H1 (cell line): ENCODE measurements at regions of chr3 and their contacts with region 1.

Region 1: GRCh38 chr3:43690400-43691119 is at the start of gene ABHD5:
- DNase-seq: peak; percentile 89 to 94
- H3K4me3 ChIP-seq: peak within 1 kb of the TSS; percentile 51 to 87 (median 69)
- H3K27ac ChIP-seq: peak within 1 kb of the TSS; percentile 64
- H3K4me1 ChIP-seq: peaks cover 0 to 15% (median 4%) of the 10 kb centered on the region in 4 experiments; a peak in 5 of 7 replicates
- H3K27me3 ChIP-seq: no peaks in the 10 kb centered on the region
- CTCF ChIP-seq: peak in 2 of 3 experiments; percentile 19 to 20; a peak in 2 of 4 replicates
- EP300 ChIP-seq: no peak
- POLR2A ChIP-seq: peak; percentile 98 to 99
- RAD21 ChIP-seq: peak; percentile 19; a peak in 1 of 4 replicates
- total RNA-seq, gene ABHD5: 16.4 and 17.9 TPM in 2 replicates

Region 2: GRCh38 chr3:43621656-43622432 is 68.7 kb before region 1 on chr3 and contains the start of gene ANO10:
- CTCF ChIA-PET with region 1: no interaction called
- POLR2A ChIA-PET with region 1: interaction called, 10 read pairs
- DNase-seq: peak; percentile 98
- H3K4me3 ChIP-seq: peak within 1 kb of the TSS; percentile 66 to 97 (median 83)
- H3K27ac ChIP-seq: peak within 1 kb of the TSS; percentile 75
- H3K4me1 ChIP-seq: peaks cover 0 to 3% (median 1%) of the 10 kb centered on the region in 4 experiments; a peak in 2 of 7 replicates
- H3K27me3 ChIP-seq: no peaks in the 10 kb centered on the region
- CTCF ChIP-seq: no peak
- EP300 ChIP-seq: no peak
- POLR2A ChIP-seq: peak in 1 of 2 experiments; percentile 73; a peak in 2 of 3 replicates
- RAD21 ChIP-seq: no peak
- total RNA-seq, gene ANO10: 53.2 and 53.6 TPM in 2 replicates

Region 3: DNA sequence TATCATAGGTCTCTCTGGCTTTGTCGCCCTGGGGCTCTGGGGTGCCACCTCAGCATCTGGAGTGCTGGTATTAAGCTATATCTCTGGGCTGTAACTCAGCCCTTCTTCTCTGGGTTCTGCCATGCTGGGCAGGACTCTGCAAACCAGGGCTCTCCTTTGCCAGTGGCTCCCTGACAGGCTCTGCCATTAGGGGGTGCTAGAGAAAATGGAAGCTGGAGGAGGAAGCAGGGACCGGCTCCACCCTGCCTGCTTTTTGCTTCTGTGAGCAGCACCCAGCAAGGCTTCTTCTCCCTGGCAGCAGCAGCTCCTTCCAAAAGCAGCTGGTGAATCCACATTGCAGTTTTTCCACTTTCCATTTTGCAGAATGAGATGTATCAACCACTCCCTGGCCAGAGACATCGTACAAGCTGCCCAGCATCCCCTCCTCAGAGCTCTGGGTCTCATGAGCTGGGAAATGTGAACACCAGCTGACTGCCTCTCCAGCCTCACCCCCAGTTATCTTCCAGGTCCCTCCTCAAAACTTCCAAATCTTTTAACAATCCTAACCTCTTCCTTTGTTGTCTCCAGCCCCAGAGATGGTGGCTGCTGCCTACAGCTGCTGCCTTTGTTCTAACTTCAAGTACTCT is 165.2 kb after region 1 on chr3:
- CTCF ChIA-PET with region 1: no interaction called
- POLR2A ChIA-PET with region 1: no interaction called
- DNase-seq: peak in 1 of 2 experiments; percentile 84
- H3K4me3 ChIP-seq: no peak overlapping the region
- H3K27ac ChIP-seq: no peak overlapping the region
- H3K4me1 ChIP-seq: peaks cover 6 to 10% (median 9%) of the 10 kb centered on the region in 4 experiments
- H3K27me3 ChIP-seq: peaks cover 0 to 3% (median under 1%) of the 10 kb centered on the region in 4 experiments; a peak in 2 of 7 replicates
- CTCF ChIP-seq: peak; percentile 77 to 89 (median 86)
- EP300 ChIP-seq: no peak
- POLR2A ChIP-seq: no peak
- RAD21 ChIP-seq: peak; percentile 75 to 83